AG04450 (cell line): ENCODE measurements at regions of chr4 and their contacts with region 1.

Region 1: GRCh38 chr4:90419124-90419711 is 292.0 kb downstream of the CCSER1 start:
- DNase-seq: no peak
- H3K4me3 ChIP-seq: no peak overlapping the region
- H3K27ac ChIP-seq: no peak overlapping the region
- H3K27me3 ChIP-seq: no peaks in the 10 kb centered on the region
- CTCF ChIP-seq: peak; percentile 59

Region 2: GRCh38 chr4:90403781-90404180 is 15.4 kb before region 1 on chr4:
- CTCF ChIA-PET with region 1: interaction called, 11 read pairs
- POLR2A ChIA-PET with region 1: no interaction called
- DNase-seq: no peak
- H3K4me3 ChIP-seq: no peak overlapping the region
- H3K27ac ChIP-seq: no peak overlapping the region
- H3K27me3 ChIP-seq: no peaks in the 10 kb centered on the region
- CTCF ChIP-seq: no peak